ENCODE measurements at regions of chr12 and their contacts with region 1.

Region 1: GRCh38 chr12:92987362-92987761 is 58.3 kb upstream of the EEA1 start:
- DNase-seq: peak; percentile 43 to 83
- H3K4me3 ChIP-seq: no peak overlapping the region
- H3K4me1 ChIP-seq: peaks cover 9% of the 10 kb centered on the region
- H3K27me3 ChIP-seq: no peaks in the 10 kb centered on the region

Region 2: GRCh38 chr12:92717202-92717601 is 270.2 kb before region 1 on chr12:
- in situ Hi-C with region 1: no loop called
- DNase-seq: peak in 1 of 2 experiments; percentile 30
- H3K4me3 ChIP-seq: no peak overlapping the region
- H3K4me1 ChIP-seq: no peaks in the 10 kb centered on the region
- H3K27me3 ChIP-seq: 0 out of 2 replicates have a peak, but pooled peaks cover 3% of the 10 kb centered on the region

Region 3: GRCh38 chr12:92784795-92785562 is 202.4 kb before region 1 on chr12:
- in situ Hi-C with region 1: loop called (anchors 25 kb)
- DNase-seq: peak; percentile 39 to 84
- H3K4me3 ChIP-seq: no peak overlapping the region
- H3K4me1 ChIP-seq: no peaks in the 10 kb centered on the region
- H3K27me3 ChIP-seq: no peaks in the 10 kb centered on the region

Region 4: GRCh38 chr12:93397412-93397811 is 410.1 kb after region 1 on chr12:
- in situ Hi-C with region 1: loop called (anchors 5 kb)
- DNase-seq: no peak
- H3K4me3 ChIP-seq: no peak overlapping the region
- H3K4me1 ChIP-seq: no peaks in the 10 kb centered on the region
- H3K27me3 ChIP-seq: no peaks in the 10 kb centered on the region

Measured in HAP-1 (cell line).